SK-N-SH (cell line): ENCODE measurements at regions of chr10 and their contacts with region 1.

Region 1: GRCh38 chr10:92517034-92517655 is 56.7 kb downstream of the IDE start:
- DNase-seq: peak; percentile 61
- H3K4me3 ChIP-seq: no peak overlapping the region
- H3K27ac ChIP-seq: no peak overlapping the region
- H3K4me1 ChIP-seq: no peaks in the 10 kb centered on the region
- H3K27me3 ChIP-seq: no peaks in the 10 kb centered on the region
- CTCF ChIP-seq: peak; percentile 90
- EP300 ChIP-seq: no peak
- RAD21 ChIP-seq: peak; percentile 80

Region 2: DNA sequence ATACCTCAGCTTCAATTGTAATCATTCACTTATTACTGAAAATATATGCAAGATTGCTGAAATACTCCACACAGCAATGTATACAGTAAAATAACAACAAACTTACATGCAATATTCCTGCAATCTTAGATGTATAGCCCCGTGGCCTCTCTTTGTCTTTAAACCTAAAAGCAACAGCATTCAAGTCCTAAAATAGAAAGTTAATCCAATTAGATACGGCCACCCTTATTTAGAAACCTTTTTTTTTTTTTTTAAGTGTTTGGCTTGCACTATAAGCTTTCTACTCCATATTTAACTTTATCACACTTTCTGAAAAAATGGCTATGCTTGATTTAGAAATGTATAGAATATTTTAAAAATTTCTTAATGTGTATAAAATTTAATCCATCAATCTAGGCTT is 10.8 kb before region 1 on chr10:
- CTCF ChIA-PET with region 1: interaction called, 12 read pairs
- POLR2A ChIA-PET with region 1: no interaction called
- DNase-seq: no peak
- H3K4me3 ChIP-seq: no peak overlapping the region
- H3K27ac ChIP-seq: no peak overlapping the region
- H3K4me1 ChIP-seq: no peaks in the 10 kb centered on the region; a peak in 1 of 4 replicates
- H3K27me3 ChIP-seq: no peaks in the 10 kb centered on the region
- CTCF ChIP-seq: no peak
- EP300 ChIP-seq: no peak
- RAD21 ChIP-seq: no peak

Region 3: DNA sequence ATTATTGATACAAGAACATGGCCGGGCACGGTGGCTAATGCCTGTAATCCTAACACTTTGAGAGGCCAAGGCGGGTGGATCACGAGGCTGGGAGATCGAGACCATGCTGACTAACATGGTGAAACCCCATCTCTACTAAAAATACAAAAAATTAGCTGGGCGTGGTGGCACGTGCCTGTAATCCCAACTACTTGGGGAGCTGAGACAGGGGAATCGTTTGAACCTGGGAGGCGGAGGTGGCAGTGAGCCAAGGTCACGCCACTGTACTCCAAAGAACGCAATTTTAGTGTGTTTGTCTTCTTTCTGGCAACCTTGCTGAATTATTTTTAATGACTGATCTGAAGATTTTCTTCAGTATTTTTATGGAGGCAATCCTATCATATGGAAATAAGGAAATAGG is 10.6 kb after region 1 on chr10:
- CTCF ChIA-PET with region 1: interaction called, 15 read pairs
- POLR2A ChIA-PET with region 1: no interaction called
- DNase-seq: no peak
- H3K4me3 ChIP-seq: no peak overlapping the region
- H3K27ac ChIP-seq: no peak overlapping the region
- H3K4me1 ChIP-seq: no peaks in the 10 kb centered on the region
- H3K27me3 ChIP-seq: no peaks in the 10 kb centered on the region
- CTCF ChIP-seq: no peak
- EP300 ChIP-seq: no peak
- RAD21 ChIP-seq: no peak

Region 4: GRCh38 chr10:92538231-92538958 is 21.2 kb after region 1 on chr10:
- CTCF ChIA-PET with region 1: interaction called, 12 read pairs
- POLR2A ChIA-PET with region 1: no interaction called
- DNase-seq: no peak
- H3K4me3 ChIP-seq: no peak overlapping the region
- H3K27ac ChIP-seq: no peak overlapping the region
- H3K4me1 ChIP-seq: peaks cover 3 to 5% of the 10 kb centered on the region in 2 experiments; a peak in 2 of 4 replicates
- H3K27me3 ChIP-seq: no peaks in the 10 kb centered on the region
- CTCF ChIP-seq: no peak
- EP300 ChIP-seq: no peak
- RAD21 ChIP-seq: no peak

Region 5: GRCh38 chr10:92544296-92544695 is 27.2 kb after region 1 on chr10:
- CTCF ChIA-PET with region 1: interaction called, 12 read pairs
- POLR2A ChIA-PET with region 1: no interaction called
- DNase-seq: peak; percentile 25
- H3K4me3 ChIP-seq: no peak overlapping the region
- H3K27ac ChIP-seq: no peak overlapping the region
- H3K4me1 ChIP-seq: peaks cover 3 to 10% of the 10 kb centered on the region in 2 experiments; a peak in 3 of 4 replicates
- H3K27me3 ChIP-seq: no peaks in the 10 kb centered on the region
- CTCF ChIP-seq: no peak
- EP300 ChIP-seq: no peak
- RAD21 ChIP-seq: no peak